ENCODE measurements at regions of chr12 and their contacts with region 1.

Region 1: DNA sequence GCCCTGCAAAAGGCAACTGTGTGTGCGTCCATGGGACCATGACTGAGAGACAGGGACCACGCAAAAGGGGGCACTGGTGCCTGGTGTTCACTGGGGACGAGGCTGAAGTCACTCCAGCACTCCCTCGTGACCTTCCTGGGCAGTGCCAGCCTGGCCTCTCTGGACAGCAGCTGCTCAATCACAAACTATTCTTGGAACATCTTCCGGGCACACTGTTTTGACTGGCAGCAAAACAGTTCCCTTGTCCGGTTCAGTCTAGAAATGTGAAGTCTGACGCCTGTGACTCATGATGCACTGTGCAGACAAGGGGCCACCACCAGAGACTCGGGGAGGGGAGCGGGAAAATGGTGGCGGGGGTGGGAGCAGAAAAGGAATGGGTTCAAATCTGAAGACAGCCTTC is 20.8 kb downstream of the SNRNP35 start:
- DNase-seq: peak in 1 of 9 donors; percentile 2
- ATAC-seq: no peak
- H3K4me3 ChIP-seq: no peak overlapping the region
- H3K4me3 Mint-ChIP-seq: no peak overlapping the region
- H3K27ac ChIP-seq: no peak overlapping the region
- H3K27ac Mint-ChIP-seq: peak overlapping the region in 5 of 9 donors; percentile 46 to 93 (median 75)
- H3K4me1 ChIP-seq: peaks cover 0 to 23% of the 10 kb centered on the region in 2 donors
- H3K4me1 Mint-ChIP-seq: peaks cover 21 to 65% (median 50%) of the 10 kb centered on the region in 7 donors
- H3K27me3 ChIP-seq: no peaks in the 10 kb centered on the region
- H3K27me3 Mint-ChIP-seq: no peaks in the 10 kb centered on the region

Region 2: GRCh38 chr12:123436017-123436964 is 42.5 kb before region 1 on chr12 and contains the start of gene RILPL2:
- CTCF ChIA-PET with region 1: no interaction called
- POLR2A ChIA-PET with region 1: interaction called, 6 read pairs
- intact Hi-C with region 1: loop called in 1 of 2 experiments (anchors 1 kb)
- DNase-seq: peak; percentile 79 to 96 (median 88)
- ATAC-seq: peak; percentile 91
- H3K4me3 ChIP-seq: peak within 1 kb of the TSS; percentile 96
- H3K4me3 Mint-ChIP-seq: peak within 1 kb of the TSS; percentile 85 to 97 (median 93)
- H3K27ac ChIP-seq: peak within 1 kb of the TSS; percentile 88
- H3K27ac Mint-ChIP-seq: peak within 1 kb of the TSS; percentile 77 to 96 (median 88)
- H3K4me1 ChIP-seq: peaks cover 11 to 29% of the 10 kb centered on the region in 2 donors
- H3K4me1 Mint-ChIP-seq: peaks cover 24 to 47% (median 33%) of the 10 kb centered on the region in 7 donors
- H3K27me3 ChIP-seq: no peaks in the 10 kb centered on the region
- H3K27me3 Mint-ChIP-seq: no peaks in the 10 kb centered on the region
- total RNA-seq, gene RILPL2: 4.3 to 12.8 (median 5.6) TPM

Region 3: DNA sequence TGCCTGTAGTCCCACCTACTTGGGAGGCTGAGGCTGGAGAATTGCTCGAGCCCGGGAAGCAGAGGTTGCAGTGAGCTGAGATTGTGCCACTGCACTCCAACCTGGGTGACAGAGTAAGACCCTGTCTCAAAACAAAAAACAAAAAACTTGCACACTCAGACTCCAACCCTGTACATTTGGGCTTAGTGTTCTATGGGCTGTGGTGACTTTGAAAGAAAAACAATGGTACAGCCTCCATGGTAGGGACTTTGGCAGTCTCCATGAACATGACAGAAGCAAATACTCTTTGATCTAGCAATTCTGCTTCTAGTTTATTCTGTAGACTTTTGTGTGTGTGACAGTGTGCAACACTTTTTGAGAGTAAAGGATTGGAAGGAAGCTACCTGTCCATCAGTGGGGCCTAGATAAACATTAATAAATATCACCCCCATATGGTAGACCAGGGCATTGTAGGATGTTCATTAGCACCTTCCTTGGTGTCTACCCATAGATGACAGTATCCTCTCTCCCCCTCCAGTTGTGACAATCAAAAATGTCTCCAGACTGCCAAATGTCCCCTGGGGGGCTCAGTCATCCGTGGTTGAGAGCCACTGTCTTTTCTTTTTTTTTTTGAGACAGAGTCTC is 10.1 kb before region 1 on chr12:
- CTCF ChIA-PET with region 1: no interaction called
- POLR2A ChIA-PET with region 1: interaction called, 15 read pairs
- intact Hi-C with region 1: no loop called
- DNase-seq: peak in 1 of 9 donors; percentile 4
- ATAC-seq: peak; percentile 75
- H3K4me3 ChIP-seq: no peak overlapping the region
- H3K4me3 Mint-ChIP-seq: no peak overlapping the region
- H3K27ac ChIP-seq: no peak overlapping the region
- H3K27ac Mint-ChIP-seq: peak overlapping the region in 1 of 9 donors; percentile 45
- H3K4me1 ChIP-seq: no peaks in the 10 kb centered on the region
- H3K4me1 Mint-ChIP-seq: peaks cover 0 to 34% (median 18%) of the 10 kb centered on the region in 7 donors
- H3K27me3 ChIP-seq: no peaks in the 10 kb centered on the region
- H3K27me3 Mint-ChIP-seq: no peaks in the 10 kb centered on the region

Region 4: GRCh38 chr12:123522164-123522563 is 43.4 kb after region 1 on chr12:
- CTCF ChIA-PET with region 1: no interaction called
- POLR2A ChIA-PET with region 1: no interaction called
- intact Hi-C with region 1: no loop called
- DNase-seq: no peak
- ATAC-seq: no peak
- H3K4me3 ChIP-seq: no peak overlapping the region
- H3K4me3 Mint-ChIP-seq: no peak overlapping the region
- H3K27ac ChIP-seq: no peak overlapping the region
- H3K27ac Mint-ChIP-seq: no peak overlapping the region
- H3K4me1 ChIP-seq: no peaks in the 10 kb centered on the region
- H3K4me1 Mint-ChIP-seq: no peaks in the 10 kb centered on the region
- H3K27me3 ChIP-seq: no peaks in the 10 kb centered on the region
- H3K27me3 Mint-ChIP-seq: no peaks in the 10 kb centered on the region

Region 5: GRCh38 chr12:123533672-123534643 is 55.2 kb after region 1 on chr12 and contains the start of gene RILPL1:
- CTCF ChIA-PET with region 1: no interaction called
- POLR2A ChIA-PET with region 1: interaction called, 3 read pairs
- intact Hi-C with region 1: loop called in 1 of 2 experiments (anchors 5 kb)
- DNase-seq: peak; percentile 16 to 70 (median 47)
- ATAC-seq: peak; percentile 86
- H3K4me3 ChIP-seq: peak within 1 kb of the TSS; percentile 65
- H3K4me3 Mint-ChIP-seq: peak within 1 kb of the TSS; percentile 83 to 91 (median 88)
- H3K27ac ChIP-seq: peak within 1 kb of the TSS; percentile 61
- H3K27ac Mint-ChIP-seq: peak within 1 kb of the TSS; percentile 60 to 95 (median 79)
- H3K4me1 ChIP-seq: peaks cover 11 to 18% of the 10 kb centered on the region in 2 donors
- H3K4me1 Mint-ChIP-seq: peaks cover 11 to 25% (median 16%) of the 10 kb centered on the region in 7 donors
- H3K27me3 ChIP-seq: no peaks in the 10 kb centered on the region
- H3K27me3 Mint-ChIP-seq: peaks cover 0 to 22% (median 0%) of the 10 kb centered on the region in 5 donors
- total RNA-seq, gene RILPL1: 1.5 to 9.2 (median 3.9) TPM

Region 6: GRCh38 chr12:123670882-123671728 is 192.3 kb after region 1 on chr12 and contains the start of gene TCTN2:
- CTCF ChIA-PET with region 1: no interaction called
- POLR2A ChIA-PET with region 1: no interaction called
- intact Hi-C with region 1: no loop called
- DNase-seq: peak; percentile 81 to 93 (median 91)
- ATAC-seq: peak; percentile 100
- H3K4me3 ChIP-seq: peak within 1 kb of the TSS; percentile 75
- H3K4me3 Mint-ChIP-seq: peak within 1 kb of the TSS; percentile 75 to 92 (median 86)
- H3K27ac ChIP-seq: peak within 1 kb of the TSS; percentile 69
- H3K27ac Mint-ChIP-seq: peak within 1 kb of the TSS; percentile 31 to 86 (median 68)
- H3K4me1 ChIP-seq: peaks cover 3 to 10% of the 10 kb centered on the region in 2 donors
- H3K4me1 Mint-ChIP-seq: peaks cover 5 to 19% (median 11%) of the 10 kb centered on the region in 7 donors
- H3K27me3 ChIP-seq: no peaks in the 10 kb centered on the region
- H3K27me3 Mint-ChIP-seq: no peaks in the 10 kb centered on the region
- total RNA-seq, gene TCTN2: 2.5 to 9.1 (median 5.3) TPM